GM23248 (cell line): ENCODE measurements at regions of chr7 and their contacts with region 1.

Region 1: DNA sequence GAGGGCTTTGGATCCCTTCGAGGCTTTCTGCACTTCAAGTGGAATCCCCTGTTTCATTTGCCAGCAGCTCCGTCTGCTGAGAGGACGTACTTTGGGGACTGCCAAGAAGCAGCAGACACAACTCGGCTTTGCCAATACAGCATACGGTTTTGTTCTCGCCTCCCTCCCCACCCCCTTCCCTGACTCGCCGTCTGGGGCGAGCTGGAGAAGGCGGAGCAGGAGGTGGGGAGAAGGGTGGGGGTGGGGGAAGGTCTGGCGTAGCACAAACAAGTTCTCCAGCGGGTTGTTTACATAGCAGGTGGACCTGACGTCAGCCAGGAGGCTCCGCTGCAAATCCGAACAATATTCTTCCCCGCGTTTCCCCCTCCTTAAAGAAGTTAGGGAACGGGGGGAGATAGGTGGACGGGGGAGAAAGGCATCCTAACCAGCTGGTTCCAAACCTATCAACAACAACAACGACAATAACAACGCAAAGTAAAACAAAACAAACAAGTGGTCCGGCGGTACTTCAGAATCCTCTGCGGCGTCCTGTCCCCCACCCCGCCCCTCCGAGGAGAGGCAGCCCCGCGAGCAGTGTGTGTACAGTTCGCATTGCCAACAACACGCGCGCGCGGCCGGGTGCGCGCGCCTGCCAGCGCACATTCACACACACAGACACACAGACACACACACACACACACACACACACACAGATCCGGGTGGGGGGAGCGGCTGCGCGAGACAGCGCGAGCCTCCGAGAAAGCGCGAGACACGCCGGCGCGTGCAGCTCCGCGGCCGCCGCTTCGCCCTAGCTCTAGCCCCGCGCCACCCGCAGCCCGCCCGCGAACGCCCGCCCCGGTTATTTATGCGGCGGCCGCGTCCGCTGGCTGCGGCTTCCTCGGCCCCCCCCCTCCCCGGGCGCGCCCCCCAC is 167.0 kb upstream of the PPP1R3A start:
- DNase-seq: peak; percentile 83
- H3K4me3 ChIP-seq: peak overlapping the region; percentile 90
- H3K27ac ChIP-seq: no peak overlapping the region
- H3K4me1 ChIP-seq: no peaks in the 10 kb centered on the region; the same call in 1 of the 2 replicates
- H3K27me3 ChIP-seq: peaks cover 34% of the 10 kb centered on the region

Region 2: GRCh38 chr7:113730309-113730955 is 355.4 kb before region 1 on chr7:
- in situ Hi-C with region 1: no loop called
- DNase-seq: peak; percentile 78
- H3K4me3 ChIP-seq: no peak overlapping the region
- H3K27ac ChIP-seq: peak overlapping the region; percentile 31
- H3K4me1 ChIP-seq: peaks cover 10% of the 10 kb centered on the region
- H3K27me3 ChIP-seq: no peaks in the 10 kb centered on the region

Region 3: GRCh38 chr7:114405427-114405826 is 319.6 kb after region 1 on chr7:
- in situ Hi-C with region 1: no loop called
- DNase-seq: peak; percentile 45
- H3K4me3 ChIP-seq: no peak overlapping the region
- H3K27ac ChIP-seq: no peak overlapping the region
- H3K4me1 ChIP-seq: peaks cover 11% of the 10 kb centered on the region
- H3K27me3 ChIP-seq: no peaks in the 10 kb centered on the region

Region 4: DNA sequence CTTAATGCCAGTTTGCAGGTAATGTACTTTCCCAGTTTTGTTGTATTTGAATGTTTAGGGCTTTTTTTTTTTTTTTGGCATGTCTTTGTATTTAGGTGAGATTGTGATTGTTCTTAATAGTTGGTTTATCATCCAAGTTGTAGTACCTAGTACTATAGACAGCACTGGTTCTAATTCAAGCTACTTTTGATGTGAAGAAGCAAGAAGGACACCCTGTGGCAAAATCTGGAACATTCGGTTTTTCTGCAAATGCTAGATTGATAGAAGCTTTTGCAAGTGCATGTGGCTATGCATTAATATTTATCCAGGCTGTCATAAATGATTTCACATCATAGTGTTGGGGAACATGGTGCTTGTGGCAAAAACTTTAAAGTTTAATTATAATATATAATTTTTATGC is 577.7 kb after region 1 on chr7:
- in situ Hi-C with region 1: loop called (anchors 25 kb)
- DNase-seq: peak; percentile 42
- H3K4me3 ChIP-seq: no peak overlapping the region
- H3K27ac ChIP-seq: no peak overlapping the region
- H3K4me1 ChIP-seq: no peaks in the 10 kb centered on the region
- H3K27me3 ChIP-seq: no peaks in the 10 kb centered on the region